Activated T-helper 1 cell treated with anti-CD3 and anti-CD28 coated beads, Interleukin-12 subunit alpha, Interleukin-12 subunit beta, Interleukin-2, Interleukin-4 antibody, amounts not matched to agents 30 ng/mL and 10 ng/mL and 1 ng/mL, durations not matched to agents 14 hours and 24 hours and 36 hours (primary cell): ENCODE measurements at regions of chr9 and their contacts with region 1.

Region 1: DNA sequence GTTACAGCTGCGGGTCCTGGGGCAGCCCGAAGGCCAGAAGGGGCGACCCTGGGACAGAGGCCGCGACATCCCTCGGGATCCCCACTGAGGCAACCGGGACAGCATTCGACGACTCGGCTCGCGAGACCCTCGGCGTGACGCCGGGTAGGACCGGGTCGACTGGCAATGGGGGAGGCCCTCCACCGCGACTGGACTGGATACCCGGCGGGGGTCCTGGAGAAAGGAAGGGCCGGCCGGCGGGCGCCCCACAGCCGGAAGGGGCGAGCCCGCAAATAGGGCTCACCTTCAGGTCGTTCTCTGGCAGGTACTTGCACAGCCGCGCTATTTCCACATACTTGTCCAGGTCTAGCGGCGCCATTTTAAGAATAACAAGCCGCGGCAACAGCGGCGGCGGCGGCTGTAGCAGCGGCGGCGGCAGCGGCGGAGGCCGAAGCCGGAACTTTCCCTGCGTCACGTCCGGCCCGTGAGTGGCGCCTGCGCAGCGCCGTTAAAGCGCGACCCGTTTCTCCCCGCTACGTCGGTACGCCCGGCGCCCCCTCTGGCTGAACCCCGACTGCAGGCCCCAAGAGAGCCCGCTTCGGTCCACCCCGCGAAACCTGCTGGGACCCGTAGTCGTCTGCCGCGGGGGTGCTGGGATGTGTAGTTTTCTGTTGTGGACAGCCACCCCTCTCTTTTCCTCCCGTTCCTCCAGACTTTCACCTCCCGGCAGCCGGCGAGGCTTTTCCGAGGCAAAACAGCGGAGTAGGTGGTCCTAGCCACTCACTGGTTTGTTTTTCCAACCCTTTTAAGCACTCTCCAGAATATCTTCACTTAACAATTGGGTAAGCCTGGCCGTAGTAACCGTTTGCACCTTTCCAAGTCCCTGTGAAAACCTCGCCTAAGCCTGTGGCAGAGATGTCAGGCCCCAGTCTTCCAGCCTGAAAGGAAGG is at the start of gene PPP6C:
- DNase-seq: peak; percentile 96
- H3K4me3 Mint-ChIP-seq: peak within 1 kb of the TSS; percentile 96
- H3K27ac Mint-ChIP-seq: peak within 1 kb of the TSS; percentile 88
- H3K4me1 Mint-ChIP-seq: peaks cover 33% of the 10 kb centered on the region
- H3K27me3 Mint-ChIP-seq: no peaks in the 10 kb centered on the region
- total RNA-seq, gene PPP6C: 47.2 and 50.8 TPM in 2 replicates

Region 2: GRCh38 chr9:124861342-124862229 is 328.0 kb before region 1 on chr9 and contains the starts of genes ARPC5L and RPL35:
- intact Hi-C with region 1: loop called (anchors 1 kb)
- DNase-seq: peak; percentile 95
- H3K4me3 Mint-ChIP-seq: peak within 1 kb of the TSS; percentile 96
- H3K27ac Mint-ChIP-seq: peak within 1 kb of the TSS; percentile 98
- H3K4me1 Mint-ChIP-seq: peaks cover 35% of the 10 kb centered on the region
- H3K27me3 Mint-ChIP-seq: no peaks in the 10 kb centered on the region
- total RNA-seq, gene ARPC5L: 111 and 115 TPM in 2 replicates
- total RNA-seq, gene RPL35: 1,681 and 1,750 TPM in 2 replicates

Region 3: DNA sequence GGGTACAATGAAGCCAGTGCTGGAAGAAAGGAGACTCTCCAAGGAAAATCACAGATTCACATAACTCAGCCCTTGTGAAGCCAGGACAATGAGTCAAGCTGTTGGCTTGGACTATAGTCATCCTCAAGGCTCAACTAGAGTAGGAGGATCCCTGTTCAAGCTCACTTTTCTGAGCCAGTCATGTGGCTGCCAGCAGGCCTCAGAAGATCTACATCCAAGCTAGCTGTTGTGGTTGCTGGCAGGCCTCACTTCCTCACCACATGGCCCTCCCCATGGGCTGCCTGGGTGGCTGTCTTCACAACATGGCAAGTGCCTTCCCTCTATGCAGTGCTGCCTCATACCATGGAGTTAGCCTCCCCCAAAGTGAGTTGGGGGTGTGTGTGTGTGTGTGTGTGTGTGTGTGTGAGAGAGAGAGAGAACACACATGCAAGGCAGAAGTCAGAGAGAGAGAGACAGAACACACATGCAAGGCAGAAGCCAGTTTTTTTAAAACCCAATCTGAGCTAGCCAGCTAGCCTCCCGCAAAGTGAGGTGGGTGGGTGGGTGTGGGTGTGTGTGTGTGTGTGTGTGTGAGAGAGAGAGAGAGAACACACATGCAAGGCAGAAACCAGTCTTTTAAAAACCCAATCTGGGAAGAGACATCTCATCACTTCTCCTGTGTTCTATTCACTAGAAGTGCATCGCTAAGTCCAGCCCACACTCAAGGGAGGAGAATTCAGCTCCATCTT is 63.4 kb before region 1 on chr9:
- intact Hi-C with region 1: no loop called
- DNase-seq: peak; percentile 77
- H3K4me3 Mint-ChIP-seq: peak overlapping the region; percentile 62
- H3K27ac Mint-ChIP-seq: peak overlapping the region; percentile 98
- H3K4me1 Mint-ChIP-seq: peaks cover 36% of the 10 kb centered on the region
- H3K27me3 Mint-ChIP-seq: no peaks in the 10 kb centered on the region

Region 4: DNA sequence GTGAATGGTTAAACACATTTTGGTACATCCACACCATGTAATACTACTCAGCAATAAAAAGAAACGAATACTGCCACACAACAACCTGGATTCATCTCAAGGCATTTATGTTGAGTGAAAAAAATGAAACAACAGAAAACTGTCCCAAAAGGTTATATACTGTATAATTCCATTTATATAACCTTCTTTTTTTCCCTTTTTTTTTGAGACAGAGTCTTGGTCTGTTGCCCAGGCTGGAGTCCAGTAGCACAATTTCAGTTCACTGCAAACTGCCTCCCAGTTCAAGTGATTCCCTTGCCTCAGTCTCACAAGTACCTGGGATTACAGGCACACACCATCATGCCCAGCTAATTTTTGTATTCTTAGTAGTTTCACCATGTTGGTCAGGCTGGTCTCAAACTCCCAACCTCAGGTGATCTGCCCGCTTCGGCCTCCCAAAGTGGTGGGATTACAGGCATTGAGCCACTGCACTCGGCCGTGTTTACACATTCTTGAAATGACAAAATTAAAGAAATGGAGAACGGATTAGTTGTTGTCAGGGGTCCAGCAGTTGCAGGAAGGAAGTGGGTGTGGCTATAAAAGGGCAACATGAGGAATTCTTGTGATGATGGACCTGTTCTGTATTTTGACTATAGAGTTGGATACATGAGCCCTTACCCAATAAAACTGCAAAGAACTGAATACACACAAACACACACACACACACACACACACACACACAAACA is 17.4 kb before region 1 on chr9:
- intact Hi-C with region 1: no loop called
- DNase-seq: no peak
- H3K4me3 Mint-ChIP-seq: no peak overlapping the region
- H3K27ac Mint-ChIP-seq: no peak overlapping the region
- H3K4me1 Mint-ChIP-seq: peaks cover 8% of the 10 kb centered on the region
- H3K27me3 Mint-ChIP-seq: no peaks in the 10 kb centered on the region

Region 5: DNA sequence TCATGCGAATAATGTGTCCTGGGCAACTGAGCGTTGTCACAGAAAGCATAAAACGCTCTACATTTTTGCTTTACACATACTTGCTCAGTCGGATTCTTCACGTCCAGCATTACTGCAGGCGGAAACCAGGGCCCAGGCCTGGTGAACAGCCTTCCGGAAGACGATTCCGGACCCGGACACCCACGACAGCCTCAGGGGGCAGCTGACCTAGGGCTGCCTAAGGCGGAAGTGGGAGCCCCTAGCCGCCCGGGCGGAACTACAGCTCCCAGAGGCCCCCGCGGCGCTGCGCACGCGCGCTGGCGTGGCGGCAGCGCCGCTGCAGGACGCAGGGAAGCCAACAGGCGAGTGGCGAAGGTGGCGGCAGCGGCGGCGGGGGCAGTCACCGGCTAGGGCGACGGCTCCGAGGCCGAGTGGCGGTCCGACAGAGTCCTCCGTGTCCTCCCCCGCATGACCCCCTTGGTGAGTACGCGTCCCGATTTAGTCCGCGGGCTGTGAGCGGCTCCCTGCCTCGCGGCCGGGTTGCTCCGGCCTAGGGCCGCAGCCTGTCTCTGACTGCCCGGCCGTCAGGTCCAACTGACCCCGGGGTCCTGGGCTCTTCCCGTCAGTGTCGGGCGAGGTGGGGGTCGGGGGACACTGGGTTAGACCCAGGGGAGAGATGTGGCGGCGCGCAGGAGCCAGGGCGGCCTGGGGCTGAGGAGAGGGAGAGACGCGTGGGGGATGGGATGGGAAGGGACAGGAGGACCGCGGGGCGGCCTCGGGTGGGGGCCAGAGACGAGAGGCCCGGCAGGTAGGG is 72.1 kb after region 1 on chr9 and contains the start of gene GAPVD1:
- intact Hi-C with region 1: loop called (anchors 1 kb)
- DNase-seq: peak; percentile 88
- H3K4me3 Mint-ChIP-seq: peak within 1 kb of the TSS; percentile 99
- H3K27ac Mint-ChIP-seq: peak within 1 kb of the TSS; percentile 93
- H3K4me1 Mint-ChIP-seq: peaks cover 42% of the 10 kb centered on the region
- H3K27me3 Mint-ChIP-seq: no peaks in the 10 kb centered on the region
- total RNA-seq, gene GAPVD1: 53.6 and 56.8 TPM in 2 replicates